Psoas muscle (tissue), 8 donors: ENCODE measurements at regions of chr19 and their contacts with region 1.

Region 1: DNA sequence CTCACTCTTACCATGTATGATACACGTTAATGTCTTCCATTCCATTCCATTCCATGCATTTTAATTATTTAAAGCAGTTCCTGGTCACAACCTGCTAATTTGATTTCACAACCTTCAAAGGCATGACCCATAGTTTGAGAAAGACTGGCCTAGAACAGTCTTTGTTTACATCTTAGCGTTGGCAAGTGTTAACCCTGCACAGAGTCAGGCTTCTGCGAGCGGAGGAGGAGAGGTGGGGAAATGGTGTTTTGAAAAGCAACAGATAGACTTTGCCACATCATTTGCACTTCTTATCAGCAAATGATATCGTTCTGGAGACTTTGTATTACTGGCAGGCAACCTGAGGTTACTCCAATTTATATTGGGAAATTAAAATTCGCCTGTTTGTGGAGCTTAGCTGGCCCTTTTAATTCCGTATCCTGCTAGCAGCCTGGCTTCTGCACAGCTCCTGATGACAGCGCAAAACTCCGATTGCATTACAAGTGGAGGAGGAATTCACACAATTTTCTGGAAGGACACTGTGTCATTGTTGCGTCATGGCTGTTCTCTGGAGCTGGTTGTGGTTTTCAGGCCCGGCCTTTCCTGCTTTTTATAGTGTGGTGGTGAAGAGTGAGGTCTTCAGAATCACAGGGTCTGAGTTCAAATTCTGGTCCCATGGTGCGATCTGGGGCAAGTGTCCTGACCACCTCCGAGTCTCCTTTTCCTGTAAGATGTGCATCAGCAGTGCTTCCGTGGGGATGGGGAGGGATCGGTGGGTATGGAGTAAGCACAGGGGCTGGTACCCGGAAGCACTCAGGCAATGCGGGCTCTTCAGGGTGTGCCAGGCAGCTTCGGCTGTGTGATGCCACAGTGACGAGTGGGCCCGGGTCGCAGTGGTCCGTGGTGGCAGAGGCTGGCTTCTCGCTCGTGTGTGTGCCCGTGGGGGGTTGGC is 49.1 kb upstream of the EHD2 start:
- DNase-seq: peak; percentile 75 to 83
- ATAC-seq: peak; percentile 66 to 70 (median 68)
- H3K4me3 ChIP-seq: peak overlapping the region; percentile 45
- H3K27ac ChIP-seq: peak overlapping the region; percentile 91
- H3K4me1 ChIP-seq: peaks cover 88% of the 10 kb centered on the region
- H3K27me3 ChIP-seq: no peaks in the 10 kb centered on the region
- CTCF ChIP-seq: no peak

Region 2: GRCh38 chr19:47608074-47608918 is 55.8 kb before region 1 on chr19:
- intact Hi-C with region 1: loop called in 1 of 2 experiments (anchors 2 kb)
- DNase-seq: peak; percentile 95 to 97
- ATAC-seq: peak; percentile 88 to 93 (median 91)
- H3K4me3 ChIP-seq: peak overlapping the region; percentile 100
- H3K27ac ChIP-seq: peak overlapping the region; percentile 100
- H3K4me1 ChIP-seq: peaks cover 31% of the 10 kb centered on the region
- H3K27me3 ChIP-seq: no peaks in the 10 kb centered on the region
- CTCF ChIP-seq: peak; percentile 43

Region 3: DNA sequence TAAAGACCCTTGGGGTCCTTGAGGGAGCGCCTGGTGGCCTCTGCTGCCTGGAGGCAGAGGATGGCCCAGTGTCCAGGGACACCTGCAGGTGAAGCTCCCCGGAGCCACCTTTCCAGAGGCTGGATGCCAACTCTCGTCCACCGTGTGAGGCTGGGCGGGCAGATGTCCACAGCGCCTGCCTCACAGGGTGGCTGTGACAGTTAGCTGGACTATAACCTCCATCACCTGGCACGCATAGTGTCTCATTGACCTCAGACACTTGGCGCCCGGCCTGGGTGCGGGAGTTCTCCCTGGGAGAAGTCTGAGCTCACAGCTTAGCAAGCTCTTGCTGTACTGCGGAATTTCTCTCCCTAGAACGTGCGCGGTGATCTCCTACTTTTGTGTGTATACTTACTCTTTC is 45.3 kb before region 1 on chr19:
- intact Hi-C with region 1: loop called in 1 of 2 experiments (anchors 5 kb)
- DNase-seq: peak; percentile 84 to 92
- ATAC-seq: peak; percentile 92 to 97 (median 94)
- H3K4me3 ChIP-seq: no peak overlapping the region
- H3K27ac ChIP-seq: peak overlapping the region; percentile 51
- H3K4me1 ChIP-seq: peaks cover 34% of the 10 kb centered on the region
- H3K27me3 ChIP-seq: no peaks in the 10 kb centered on the region
- CTCF ChIP-seq: no peak